ENCODE measurements at regions of chr15 and their contacts with region 1.

Region 1: DNA sequence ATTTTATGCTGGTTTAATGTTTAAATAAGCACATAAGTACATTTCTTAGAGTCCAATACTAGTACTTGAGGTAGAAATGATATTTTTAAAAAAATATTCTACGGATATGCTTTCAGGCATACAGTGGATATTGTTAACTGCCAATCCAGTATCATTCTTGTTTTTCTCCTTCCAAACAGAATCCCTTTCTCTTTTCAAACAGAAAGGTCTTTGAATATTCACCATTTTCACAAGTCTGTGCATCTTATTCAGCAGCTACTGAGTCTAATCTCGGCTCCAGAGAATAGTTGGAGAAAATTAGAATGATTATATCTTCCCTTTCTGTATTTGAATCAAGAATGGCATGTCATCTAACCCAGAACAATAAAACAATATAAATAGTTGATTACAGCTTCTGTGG is 174.5 kb downstream of the GOLGA6L6 start:
- DNase-seq: no peak
- H3K4me3 ChIP-seq: no peak overlapping the region
- H3K27ac ChIP-seq: no peak overlapping the region
- H3K4me1 ChIP-seq: no peaks in the 10 kb centered on the region
- H3K27me3 ChIP-seq: no peaks in the 10 kb centered on the region
- CTCF ChIP-seq: no peak

Region 2: GRCh38 chr15:20340931-20341661 is 26.0 kb before region 1 on chr15:
- CTCF ChIA-PET with region 1: no interaction called
- dilution Hi-C with region 1: no loop called
- in situ Hi-C with region 1: no loop called
- intact Hi-C with region 1: no loop called
- DNase-seq: peak; percentile 57
- H3K4me3 ChIP-seq: no peak overlapping the region
- H3K27ac ChIP-seq: no peak overlapping the region
- H3K4me1 ChIP-seq: no peaks in the 10 kb centered on the region
- H3K27me3 ChIP-seq: no peaks in the 10 kb centered on the region
- CTCF ChIP-seq: no peak

Region 3: GRCh38 chr15:22224241-22224671 is 1857.2 kb after region 1 on chr15:
- CTCF ChIA-PET with region 1: interaction called, 20 read pairs
- dilution Hi-C with region 1: no loop called
- in situ Hi-C with region 1: no loop called
- intact Hi-C with region 1: no loop called
- DNase-seq: no peak
- H3K4me3 ChIP-seq: no peak overlapping the region
- H3K27ac ChIP-seq: no peak overlapping the region
- H3K4me1 ChIP-seq: no peaks in the 10 kb centered on the region
- H3K27me3 ChIP-seq: no peaks in the 10 kb centered on the region
- CTCF ChIP-seq: peak; percentile 15 to 54

Measured in mammary epithelial cell (primary cell).